Right ventricle myocardium inferior (tissue), 1 donor: ENCODE measurements at regions of chr17 and their contacts with region 1.

Region 1: DNA sequence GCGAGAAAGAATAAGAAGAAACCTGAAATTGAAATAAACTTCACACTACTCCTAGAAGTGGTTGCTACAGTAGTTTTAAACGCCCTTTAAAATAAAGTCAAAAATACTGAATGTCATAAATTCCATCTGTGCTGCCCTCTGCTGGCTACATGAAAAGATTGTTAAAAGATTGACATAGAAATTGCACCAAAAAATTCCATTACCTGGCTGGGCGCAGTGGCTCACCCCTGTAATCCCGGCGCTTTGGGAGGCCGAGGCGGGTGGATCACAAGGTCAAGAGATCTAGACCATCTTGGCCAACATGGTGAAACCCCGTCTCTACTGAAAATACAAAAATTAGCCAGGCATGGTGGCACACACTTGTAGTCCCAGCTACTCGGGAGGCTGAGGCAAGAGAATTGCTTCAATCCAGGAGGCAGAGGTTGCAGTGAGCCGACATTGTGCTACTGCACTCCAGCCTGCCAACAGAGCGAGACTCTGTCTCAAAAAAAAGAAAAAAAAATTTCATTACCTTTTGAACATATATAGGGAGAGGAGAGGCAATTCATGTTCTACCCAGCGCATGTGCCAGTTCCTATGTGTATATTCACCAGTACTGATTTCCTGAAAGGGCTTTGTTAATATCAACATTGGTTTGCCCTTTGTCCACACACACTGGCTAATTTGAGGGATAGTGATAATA is 36.5 kb downstream of the CYTH1 start:
- DNase-seq: no peak
- ATAC-seq: no peak

Region 2: DNA sequence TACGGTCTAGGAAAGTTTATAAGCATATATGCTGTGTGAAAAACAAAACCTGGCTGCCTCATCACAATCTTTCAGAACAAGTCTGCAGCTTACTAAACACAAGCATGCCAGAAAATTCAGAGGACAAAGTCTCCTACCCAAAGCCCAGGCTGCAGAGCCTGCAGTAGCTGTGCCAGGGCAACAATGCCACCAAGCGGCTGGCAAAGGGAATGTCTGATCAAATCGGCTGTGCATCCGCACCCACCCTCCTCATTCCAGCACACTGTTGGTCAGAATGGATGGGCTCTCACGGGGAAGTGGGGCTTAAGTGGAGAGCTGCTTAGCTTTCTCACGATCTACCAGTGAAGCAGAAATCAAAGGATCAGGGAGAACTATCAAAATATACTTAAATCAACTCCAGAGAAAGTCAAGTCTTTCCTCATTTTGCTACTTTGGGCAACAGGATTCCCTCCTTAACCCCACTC is 37.0 kb before region 1 on chr17:
- intact Hi-C with region 1: loop called (anchors 5 kb)
- DNase-seq: peak; percentile 85
- ATAC-seq: peak; percentile 80